SK-N-SH (cell line): ENCODE measurements at regions of chr12 and their contacts with region 1.

Region 1: DNA sequence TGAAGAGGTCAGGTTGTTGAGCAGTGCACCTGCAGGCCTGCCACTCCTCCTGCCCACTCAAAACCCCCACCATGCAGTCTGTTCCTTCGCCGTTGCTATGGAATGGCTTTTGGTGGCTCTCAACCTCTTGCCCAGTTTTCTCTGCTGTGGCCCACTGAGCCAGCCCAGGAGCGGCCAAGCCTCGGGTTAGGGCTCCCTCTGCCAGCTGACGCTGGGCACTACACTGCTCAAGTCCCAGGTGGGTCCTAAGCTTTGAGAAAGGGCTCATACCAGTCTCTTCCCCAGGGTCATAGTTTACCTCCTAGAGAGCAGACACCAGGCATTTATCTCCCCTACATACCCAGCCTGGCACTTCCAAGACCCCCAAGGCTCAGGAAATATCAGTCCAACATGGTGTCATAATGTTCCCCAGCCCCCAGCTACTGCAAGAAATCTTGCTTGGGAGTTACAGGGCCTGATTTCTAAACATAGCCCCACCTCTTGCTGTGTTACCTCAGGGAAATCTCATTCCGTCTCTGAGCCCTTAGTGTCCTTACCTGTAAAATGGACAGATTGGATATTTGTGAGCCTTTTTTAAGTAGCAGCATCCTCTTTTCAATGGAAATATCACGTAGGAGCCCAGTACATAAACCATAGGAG is 59.4 kb downstream of the TSPAN11 start:
- DNase-seq: peak; percentile 88
- H3K4me3 ChIP-seq: no peak overlapping the region
- H3K27ac ChIP-seq: no peak overlapping the region
- H3K4me1 ChIP-seq: peaks cover 0 to 14% of the 10 kb centered on the region in 2 experiments; a peak in 1 of 4 replicates
- H3K27me3 ChIP-seq: no peaks in the 10 kb centered on the region
- CTCF ChIP-seq: peak; percentile 80
- EP300 ChIP-seq: no peak
- RAD21 ChIP-seq: peak; percentile 92

Region 2: GRCh38 chr12:30874455-30875321 is 111.2 kb before region 1 on chr12:
- CTCF ChIA-PET with region 1: interaction called, 103 read pairs
- POLR2A ChIA-PET with region 1: no interaction called
- DNase-seq: peak; percentile 39
- H3K4me3 ChIP-seq: no peak overlapping the region
- H3K27ac ChIP-seq: no peak overlapping the region
- H3K4me1 ChIP-seq: peaks cover 0 to 8% of the 10 kb centered on the region in 2 experiments; a peak in 1 of 4 replicates
- H3K27me3 ChIP-seq: no peaks in the 10 kb centered on the region; the same call in 1 of the 2 replicates
- CTCF ChIP-seq: no peak
- EP300 ChIP-seq: no peak
- RAD21 ChIP-seq: no peak

Region 3: GRCh38 chr12:30882706-30883105 is 103.2 kb before region 1 on chr12:
- CTCF ChIA-PET with region 1: interaction called, 103 read pairs
- POLR2A ChIA-PET with region 1: interaction called, 3 read pairs
- DNase-seq: no peak
- H3K4me3 ChIP-seq: no peak overlapping the region
- H3K27ac ChIP-seq: no peak overlapping the region
- H3K4me1 ChIP-seq: no peaks in the 10 kb centered on the region
- H3K27me3 ChIP-seq: no peaks in the 10 kb centered on the region; the same call in 1 of the 2 replicates
- CTCF ChIP-seq: peak; percentile 40
- EP300 ChIP-seq: no peak
- RAD21 ChIP-seq: peak; percentile 78

Region 4: GRCh38 chr12:30896461-30896860 is 89.5 kb before region 1 on chr12:
- CTCF ChIA-PET with region 1: interaction called, 16 read pairs
- POLR2A ChIA-PET with region 1: no interaction called
- DNase-seq: no peak
- H3K4me3 ChIP-seq: no peak overlapping the region
- H3K27ac ChIP-seq: no peak overlapping the region
- H3K4me1 ChIP-seq: peaks cover 0 to 4% of the 10 kb centered on the region in 2 experiments; a peak in 2 of 4 replicates
- H3K27me3 ChIP-seq: no peaks in the 10 kb centered on the region
- CTCF ChIP-seq: no peak
- EP300 ChIP-seq: no peak
- RAD21 ChIP-seq: no peak

Region 5: DNA sequence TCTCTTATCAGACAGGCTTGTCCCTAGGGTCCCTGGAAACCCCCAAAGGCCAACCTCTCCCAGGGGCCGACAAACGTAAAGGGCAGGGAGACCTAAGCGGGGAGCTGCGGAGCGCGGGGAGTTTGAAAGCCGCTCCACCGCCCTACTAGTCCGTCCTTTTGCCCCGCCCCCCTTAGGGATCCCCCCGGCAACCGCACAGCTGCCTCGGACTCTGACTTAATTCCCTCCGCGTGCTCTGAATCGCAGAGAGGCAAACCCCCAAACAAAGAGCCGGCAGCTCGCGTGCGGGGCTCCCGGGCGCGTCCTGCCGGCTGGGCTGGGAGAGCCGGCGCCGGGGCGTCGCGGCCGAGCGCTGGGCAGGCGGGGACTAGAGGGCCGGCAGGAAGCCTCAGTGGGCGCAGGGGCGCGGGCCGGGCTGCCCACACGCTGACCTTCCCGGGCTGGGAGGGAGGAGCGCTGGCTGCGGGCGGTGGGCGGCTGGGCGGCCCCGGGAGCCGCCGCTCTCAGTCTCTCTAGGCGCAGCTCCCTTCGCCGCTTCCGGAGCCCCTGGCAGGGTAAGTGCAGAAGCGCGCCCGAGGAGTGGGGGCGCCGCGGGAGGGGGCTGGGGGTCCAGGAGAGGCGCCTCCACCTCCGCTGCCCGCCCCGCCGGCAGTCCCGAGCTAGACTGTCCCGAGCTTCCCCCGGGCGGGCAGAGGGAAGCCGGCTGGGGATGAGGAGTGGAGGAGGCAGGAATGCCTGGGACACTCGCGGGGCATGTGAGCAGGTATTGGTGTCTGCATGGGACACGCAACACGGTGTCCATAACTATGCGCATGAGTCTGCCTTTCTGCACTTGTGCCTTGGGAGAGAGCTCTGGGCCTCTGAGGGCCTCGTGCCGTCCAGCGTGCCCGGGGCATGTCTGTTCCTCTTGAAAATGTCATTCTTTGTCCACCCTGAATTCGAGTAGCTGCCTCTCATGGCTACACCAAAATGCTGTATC is 59.4 kb before region 1 on chr12 and contains the start of gene TSPAN11:
- CTCF ChIA-PET with region 1: interaction called, 19 read pairs
- POLR2A ChIA-PET with region 1: interaction called, 6 read pairs
- DNase-seq: peak; percentile 89
- H3K4me3 ChIP-seq: peak within 1 kb of the TSS; percentile 55 to 60
- H3K27ac ChIP-seq: peak within 1 kb of the TSS in 1 of 2 experiments; percentile 86; a peak in 2 of 4 replicates
- H3K4me1 ChIP-seq: peaks cover 9 to 53% of the 10 kb centered on the region in 2 experiments; a peak in 3 of 4 replicates
- H3K27me3 ChIP-seq: no peaks in the 10 kb centered on the region
- CTCF ChIP-seq: no peak
- EP300 ChIP-seq: no peak
- RAD21 ChIP-seq: no peak
- polyA plus RNA-seq, gene TSPAN11: 6.4 and 6.6 TPM in 2 replicates

Region 6: GRCh38 chr12:30970559-30971197 is 15.3 kb before region 1 on chr12:
- CTCF ChIA-PET with region 1: interaction called, 50 read pairs
- POLR2A ChIA-PET with region 1: no interaction called
- DNase-seq: peak; percentile 77
- H3K4me3 ChIP-seq: no peak overlapping the region
- H3K27ac ChIP-seq: peak overlapping the region in 1 of 2 experiments; percentile 16; a peak in 1 of 4 replicates
- H3K4me1 ChIP-seq: peaks cover 0 to 46% of the 10 kb centered on the region in 2 experiments; a peak in 1 of 4 replicates
- H3K27me3 ChIP-seq: no peaks in the 10 kb centered on the region
- CTCF ChIP-seq: no peak
- EP300 ChIP-seq: peak in 1 of 2 experiments; percentile 44; a peak in 1 of 4 replicates
- RAD21 ChIP-seq: no peak

Region 7: DNA sequence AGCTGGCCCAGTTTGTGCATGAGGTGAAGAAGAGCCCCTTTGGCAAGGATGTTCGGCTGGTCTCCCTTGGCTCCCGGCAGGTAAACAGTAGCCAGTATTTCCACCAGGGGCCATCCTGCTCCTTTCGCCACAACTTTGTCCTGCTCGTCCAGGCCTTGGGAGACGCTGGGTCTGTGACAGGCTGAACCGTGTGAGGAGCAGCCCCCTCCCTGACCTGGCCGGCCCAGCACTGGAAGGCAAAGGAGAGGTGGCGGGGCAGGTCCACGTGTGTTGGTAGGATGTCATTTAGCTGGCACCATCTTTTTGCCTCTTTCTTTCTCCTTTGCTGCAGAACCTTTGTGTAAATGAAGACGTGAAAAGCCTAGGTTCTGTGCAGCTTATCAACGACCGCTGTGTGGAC is 103.1 kb after region 1 on chr12:
- CTCF ChIA-PET with region 1: no interaction called
- POLR2A ChIA-PET with region 1: no interaction called
- DNase-seq: no peak
- H3K4me3 ChIP-seq: no peak overlapping the region
- H3K27ac ChIP-seq: no peak overlapping the region
- H3K4me1 ChIP-seq: no peaks in the 10 kb centered on the region
- H3K27me3 ChIP-seq: no peaks in the 10 kb centered on the region
- CTCF ChIP-seq: no peak
- EP300 ChIP-seq: no peak
- RAD21 ChIP-seq: no peak

Region 8: GRCh38 chr12:31274520-31275300 is 288.8 kb after region 1 on chr12:
- CTCF ChIA-PET with region 1: interaction called, 24 read pairs
- POLR2A ChIA-PET with region 1: no interaction called
- DNase-seq: no peak
- H3K4me3 ChIP-seq: no peak overlapping the region
- H3K27ac ChIP-seq: no peak overlapping the region
- H3K4me1 ChIP-seq: no peaks in the 10 kb centered on the region
- H3K27me3 ChIP-seq: no peaks in the 10 kb centered on the region
- CTCF ChIP-seq: no peak
- EP300 ChIP-seq: no peak
- RAD21 ChIP-seq: no peak